ENCODE measurements at regions of chr11 and their contacts with region 1.

Region 1: DNA sequence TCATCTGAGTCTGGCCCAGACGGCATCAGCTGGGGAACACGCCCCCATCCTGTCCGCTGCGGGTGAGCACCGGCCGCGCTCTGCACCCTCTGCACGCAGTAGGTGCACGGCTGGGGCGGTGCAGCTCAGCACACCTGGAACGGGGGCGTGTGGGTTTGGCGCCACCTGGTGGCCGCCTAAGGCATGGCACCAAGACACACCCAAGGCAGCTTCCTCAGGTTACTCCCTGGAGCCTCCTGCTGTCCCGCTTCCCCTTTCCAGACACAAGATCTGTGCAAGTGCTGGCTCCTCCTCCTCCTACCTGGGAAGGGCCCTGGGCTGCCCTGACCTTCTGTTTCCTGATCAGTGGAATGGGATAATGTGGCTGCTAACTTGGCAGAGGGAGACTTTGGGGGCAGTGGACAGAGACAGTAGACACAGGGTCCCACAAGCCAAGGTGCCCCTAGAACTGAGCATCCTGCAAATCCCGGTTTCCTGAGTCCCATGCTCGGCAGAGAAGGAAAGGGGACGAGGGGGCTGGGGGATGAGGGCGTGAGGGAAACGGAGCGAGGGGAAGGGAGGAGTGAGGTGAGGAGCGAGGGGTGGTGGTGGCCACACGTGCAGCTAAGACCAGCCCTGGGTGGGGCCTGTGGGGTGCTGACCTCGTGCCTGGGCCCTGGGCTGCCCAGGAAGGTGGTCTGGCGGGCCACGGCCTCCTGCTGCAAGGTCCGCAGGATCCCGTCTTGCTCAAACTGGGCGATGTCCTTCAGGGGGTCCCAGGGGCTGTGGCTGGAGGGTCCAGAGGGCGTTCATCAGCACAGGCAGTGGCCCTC is 34.8 kb upstream of the CARS1 start:
- DNase-seq: peak; percentile 83 to 89
- ATAC-seq: peak; percentile 78 to 93
- H3K4me3 ChIP-seq: no peak overlapping the region
- H3K27ac ChIP-seq: no peak overlapping the region
- H3K4me1 ChIP-seq: no peaks in the 10 kb centered on the region
- CTCF ChIP-seq: peak; percentile 96
- EP300 ChIP-seq: no peak
- POLR2A ChIP-seq: no peak
- RAD21 ChIP-seq: peak; percentile 90 to 92

Region 2: DNA sequence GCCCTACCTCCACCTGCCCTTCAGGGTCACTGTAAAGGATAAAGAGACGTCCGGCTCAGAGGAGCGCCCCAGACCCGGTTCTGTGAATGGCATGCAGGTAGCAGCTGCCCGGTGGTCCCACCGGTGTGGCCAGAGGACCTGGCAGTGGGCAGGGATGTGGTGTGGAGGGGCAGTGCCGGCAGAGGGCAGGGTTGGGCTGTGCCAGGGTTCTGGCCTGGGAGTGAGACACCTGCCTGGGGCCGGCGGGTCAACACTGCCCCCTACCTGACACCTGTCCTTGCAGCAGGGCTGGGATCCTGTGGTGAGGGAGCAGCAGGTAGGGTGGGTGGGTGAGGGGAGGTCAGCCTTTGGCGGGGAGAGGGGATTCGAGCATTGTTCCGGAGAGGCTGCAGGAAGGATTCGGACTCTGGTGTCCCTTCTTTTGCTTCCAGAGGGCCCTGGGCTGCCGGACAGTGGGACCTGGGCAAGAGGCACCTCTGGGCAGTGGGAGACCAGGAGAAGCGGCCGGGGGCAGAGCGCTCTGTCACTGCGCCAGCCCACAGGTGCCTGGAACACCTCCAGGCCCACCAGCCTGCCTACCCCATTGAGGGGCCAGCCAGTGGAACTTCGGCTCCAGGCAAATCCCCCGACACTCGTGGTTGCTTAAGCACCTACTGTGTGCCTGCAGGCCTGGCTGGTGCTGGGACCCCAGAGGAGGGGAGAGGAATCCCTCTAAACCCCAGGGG is 161.1 kb before region 1 on chr11:
- CTCF ChIA-PET with region 1: interaction called, 42 read pairs
- POLR2A ChIA-PET with region 1: interaction called, 9 read pairs
- DNase-seq: peak; percentile 86 to 90
- ATAC-seq: peak; percentile 45 to 78
- H3K4me3 ChIP-seq: peak overlapping the region; percentile 67
- H3K27ac ChIP-seq: peak overlapping the region; percentile 92 to 94
- H3K4me1 ChIP-seq: peaks cover 29% of the 10 kb centered on the region
- CTCF ChIP-seq: peak; percentile 98
- EP300 ChIP-seq: no peak
- POLR2A ChIP-seq: no peak
- RAD21 ChIP-seq: peak; percentile 94 to 96

Region 3: GRCh38 chr11:3021125-3021524 is 70.9 kb before region 1 on chr11:
- CTCF ChIA-PET with region 1: interaction called, 15 read pairs
- POLR2A ChIA-PET with region 1: no interaction called
- DNase-seq: peak; percentile 52 to 60
- ATAC-seq: peak; percentile 68 to 89; a peak in 5 of 6 replicates
- H3K4me3 ChIP-seq: no peak overlapping the region
- H3K27ac ChIP-seq: no peak overlapping the region
- H3K4me1 ChIP-seq: peaks cover 8% of the 10 kb centered on the region; the same call in 1 of the 3 replicates
- CTCF ChIP-seq: peak; percentile 32; the same call in 1 of the 3 replicates
- EP300 ChIP-seq: no peak
- POLR2A ChIP-seq: no peak
- RAD21 ChIP-seq: peak; percentile 25 to 63; a peak in 3 of 5 replicates

Region 4: DNA sequence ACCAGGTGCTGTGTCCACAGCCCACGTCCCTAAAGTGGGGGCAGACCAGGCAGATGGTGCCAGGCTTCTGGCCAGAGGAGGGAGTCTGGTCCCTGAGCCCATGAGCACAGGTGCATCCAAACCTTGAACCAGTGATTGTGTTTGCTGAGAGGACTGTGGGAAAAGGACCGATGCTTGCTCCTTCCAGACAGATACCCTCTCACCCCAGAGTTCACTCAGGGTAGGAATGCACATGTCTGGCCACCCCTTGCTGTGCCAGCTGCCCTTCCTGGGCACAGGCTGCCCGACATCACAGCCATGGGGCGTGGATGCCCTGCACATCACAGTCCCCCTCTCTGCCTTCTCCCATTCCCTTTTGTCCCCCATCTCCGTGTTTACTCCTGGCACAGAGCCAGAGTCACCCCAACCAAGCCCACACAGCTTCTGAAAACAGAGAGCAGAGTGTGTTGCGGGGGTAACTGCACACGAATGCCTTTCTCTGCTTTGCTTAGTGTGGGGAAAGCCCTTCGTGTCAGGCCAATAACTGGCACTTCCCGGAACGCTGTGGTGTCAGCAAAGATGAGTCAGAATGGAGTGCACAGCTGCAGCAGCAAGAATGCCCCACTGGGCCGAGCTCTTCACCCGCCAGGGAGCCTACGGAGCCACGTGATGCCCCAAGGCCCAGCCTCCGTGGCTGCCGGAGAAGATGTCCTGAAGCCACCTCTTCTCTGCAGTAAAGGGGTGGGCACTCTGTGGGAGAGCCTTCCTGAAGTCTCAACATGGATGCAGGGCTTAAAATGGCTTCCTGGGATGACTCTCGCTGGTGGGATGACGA is 42.4 kb before region 1 on chr11:
- CTCF ChIA-PET with region 1: interaction called, 112 read pairs
- POLR2A ChIA-PET with region 1: interaction called, 3 read pairs
- DNase-seq: peak; percentile 77 to 90
- ATAC-seq: peak; percentile 94 to 96
- H3K4me3 ChIP-seq: no peak overlapping the region
- H3K27ac ChIP-seq: peak overlapping the region; percentile 38 to 79; a peak in 4 of 6 replicates
- H3K4me1 ChIP-seq: peaks cover 35% of the 10 kb centered on the region
- CTCF ChIP-seq: peak; percentile 16; the same call in 1 of the 3 replicates
- EP300 ChIP-seq: no peak
- POLR2A ChIP-seq: no peak
- RAD21 ChIP-seq: peak in 1 of 2 experiments; percentile 35; a peak in 2 of 5 replicates

Region 5: DNA sequence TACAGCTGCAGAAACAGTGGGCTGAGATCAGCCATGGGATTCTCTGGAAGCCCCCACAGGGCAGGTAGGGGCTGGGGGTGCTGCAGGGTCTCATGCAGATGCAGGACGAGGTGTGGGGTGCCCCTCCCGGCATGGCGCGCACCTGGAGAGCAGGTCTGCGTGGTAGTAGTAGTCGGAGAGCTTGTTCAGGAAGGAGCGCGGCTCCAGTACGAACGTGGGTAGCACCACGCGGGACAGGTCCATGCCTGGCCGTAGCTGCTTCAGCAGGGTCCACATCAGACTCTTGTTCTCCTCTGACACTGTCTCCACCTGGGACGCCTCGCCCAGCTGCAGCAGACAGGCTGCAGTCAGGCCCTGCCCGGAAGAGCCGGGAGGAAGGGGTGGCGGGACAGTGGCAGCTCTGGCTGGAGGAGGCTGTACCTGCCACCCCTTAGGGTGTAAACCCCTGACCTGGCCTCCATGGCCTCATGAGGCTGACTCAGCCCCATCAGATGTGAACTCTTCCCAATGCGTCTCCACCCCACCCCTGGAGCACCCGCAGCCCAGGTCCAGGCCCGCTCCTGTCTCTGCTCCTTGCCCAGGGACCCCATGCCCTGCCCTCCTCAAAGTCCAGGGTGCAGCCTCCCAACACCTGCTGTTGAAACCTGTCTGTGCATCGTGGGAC is 12.2 kb after region 1 on chr11:
- CTCF ChIA-PET with region 1: interaction called, 40 read pairs
- POLR2A ChIA-PET with region 1: no interaction called
- DNase-seq: no peak
- ATAC-seq: no peak
- H3K4me3 ChIP-seq: no peak overlapping the region
- H3K27ac ChIP-seq: no peak overlapping the region
- H3K4me1 ChIP-seq: no peaks in the 10 kb centered on the region
- CTCF ChIP-seq: no peak
- EP300 ChIP-seq: no peak
- POLR2A ChIP-seq: no peak
- RAD21 ChIP-seq: no peak

Region 6: GRCh38 chr11:3217676-3218482 is 125.9 kb after region 1 on chr11:
- CTCF ChIA-PET with region 1: interaction called, 19 read pairs
- POLR2A ChIA-PET with region 1: no interaction called
- DNase-seq: no peak
- ATAC-seq: peak; percentile 6 to 16; a peak in 3 of 6 replicates
- H3K4me3 ChIP-seq: no peak overlapping the region
- H3K27ac ChIP-seq: no peak overlapping the region
- H3K4me1 ChIP-seq: peaks cover 5% of the 10 kb centered on the region; the same call in 1 of the 3 replicates
- CTCF ChIP-seq: no peak
- EP300 ChIP-seq: no peak
- POLR2A ChIP-seq: no peak
- RAD21 ChIP-seq: no peak

Measured in A549 (cell line).